WTC11 (cell line): ENCODE measurements at regions of chr3 and their contacts with region 1.

Region 1: GRCh38 chr3:195271116-195271858 is at the start of gene XXYLT1:
- DNase-seq: peak; percentile 94
- ATAC-seq: peak; percentile 92
- H3K4me3 Mint-ChIP-seq: peak within 1 kb of the TSS; percentile 84
- H3K27ac Mint-ChIP-seq: no peak within 1 kb of the TSS; the same call in 1 of the 2 replicates
- H3K4me1 Mint-ChIP-seq: peaks cover 24% of the 10 kb centered on the region
- H3K27me3 Mint-ChIP-seq: no peaks in the 10 kb centered on the region
- CTCF ChIP-seq: peak; percentile 84
- total RNA-seq, gene XXYLT1: 21.4 to 23.4 TPM (median 22.5 TPM) in 3 replicates

Region 2: GRCh38 chr3:195259475-195260279 is 11.6 kb before region 1 on chr3:
- CTCF ChIA-PET with region 1: interaction called, 47 read pairs
- POLR2A ChIA-PET with region 1: interaction called, 6 read pairs
- DNase-seq: peak; percentile 88
- ATAC-seq: peak; percentile 66
- H3K4me3 Mint-ChIP-seq: peak overlapping the region; percentile 58
- H3K27ac Mint-ChIP-seq: no peak overlapping the region
- H3K4me1 Mint-ChIP-seq: peaks cover 46% of the 10 kb centered on the region
- H3K27me3 Mint-ChIP-seq: no peaks in the 10 kb centered on the region
- CTCF ChIP-seq: peak; percentile 85

Region 3: DNA sequence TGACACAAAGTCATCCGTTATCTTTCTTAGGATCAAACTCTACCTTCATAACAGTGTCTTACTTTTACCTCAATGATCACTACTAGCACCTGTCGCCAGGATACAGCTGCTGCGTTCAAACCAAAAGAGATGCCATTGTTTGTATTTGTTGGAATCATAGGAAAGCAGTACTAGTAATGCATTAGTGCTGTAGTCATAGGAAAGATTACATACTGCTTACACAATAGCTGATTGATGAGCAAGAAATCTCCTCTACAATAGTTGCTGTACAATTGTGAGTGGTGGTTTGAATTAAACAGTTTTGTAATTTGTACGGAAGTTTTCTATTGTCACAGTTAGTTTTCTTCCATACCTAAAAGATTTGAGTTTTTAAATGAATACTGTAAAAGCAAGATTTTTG is 150.1 kb after region 1 on chr3:
- CTCF ChIA-PET with region 1: no interaction called
- POLR2A ChIA-PET with region 1: no interaction called
- DNase-seq: no peak
- ATAC-seq: no peak
- H3K4me3 Mint-ChIP-seq: no peak overlapping the region
- H3K27ac Mint-ChIP-seq: no peak overlapping the region
- H3K4me1 Mint-ChIP-seq: peaks cover 6% of the 10 kb centered on the region; the same call in 1 of the 2 replicates
- H3K27me3 Mint-ChIP-seq: no peaks in the 10 kb centered on the region
- CTCF ChIP-seq: no peak

Region 4: GRCh38 chr3:195442573-195443390 is 171.5 kb after region 1 on chr3 and contains the start of gene ACAP2:
- CTCF ChIA-PET with region 1: interaction called, 24 read pairs
- POLR2A ChIA-PET with region 1: interaction called, 10 read pairs
- DNase-seq: peak; percentile 100
- ATAC-seq: peak; percentile 97
- H3K4me3 Mint-ChIP-seq: peak within 1 kb of the TSS; percentile 91
- H3K27ac Mint-ChIP-seq: peak within 1 kb of the TSS; percentile 63
- H3K4me1 Mint-ChIP-seq: peaks cover 40% of the 10 kb centered on the region
- H3K27me3 Mint-ChIP-seq: no peaks in the 10 kb centered on the region
- CTCF ChIP-seq: no peak
- total RNA-seq, gene ACAP2: 39.9 to 42.4 TPM (median 42.0 TPM) in 3 replicates

Region 5: DNA sequence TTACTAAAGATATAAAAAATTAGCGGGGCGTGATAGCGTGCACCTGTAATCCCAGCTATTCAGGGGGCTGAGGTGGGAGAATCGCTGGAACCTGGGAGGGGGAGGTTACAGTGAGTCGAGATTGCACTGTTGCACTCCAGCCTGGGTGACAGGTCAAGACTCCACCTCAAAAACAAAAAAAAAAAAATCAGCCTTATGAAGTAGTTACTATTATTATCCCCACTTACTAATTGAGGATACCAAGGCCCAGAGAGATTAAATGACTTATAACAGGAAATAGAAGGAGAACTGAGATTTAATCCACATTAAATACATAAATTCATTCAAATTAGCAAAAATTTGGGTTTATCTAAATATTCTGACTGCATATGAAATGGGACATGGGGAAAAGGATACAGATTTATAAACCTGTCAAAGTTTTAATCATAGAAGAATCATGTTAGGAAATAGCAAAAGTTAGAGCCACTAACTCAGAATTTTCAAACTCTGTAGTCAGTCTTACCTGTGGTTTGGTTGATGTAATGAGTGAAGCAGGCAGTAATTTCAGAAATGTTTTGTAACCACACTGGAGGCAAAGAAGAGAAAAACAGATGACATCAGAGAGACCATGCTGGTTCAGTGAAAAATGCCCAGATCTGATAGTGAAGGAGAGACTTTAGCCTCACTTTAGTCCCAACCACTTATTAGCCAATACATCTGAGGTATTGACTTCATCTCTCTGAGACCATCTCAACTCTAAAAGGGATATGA is 196.5 kb after region 1 on chr3:
- CTCF ChIA-PET with region 1: no interaction called
- POLR2A ChIA-PET with region 1: no interaction called
- DNase-seq: no peak
- ATAC-seq: no peak
- H3K4me3 Mint-ChIP-seq: no peak overlapping the region
- H3K27ac Mint-ChIP-seq: no peak overlapping the region
- H3K4me1 Mint-ChIP-seq: peaks cover 2% of the 10 kb centered on the region; the same call in 1 of the 2 replicates
- H3K27me3 Mint-ChIP-seq: no peaks in the 10 kb centered on the region; the same call in 1 of the 2 replicates
- CTCF ChIP-seq: no peak

Region 6: DNA sequence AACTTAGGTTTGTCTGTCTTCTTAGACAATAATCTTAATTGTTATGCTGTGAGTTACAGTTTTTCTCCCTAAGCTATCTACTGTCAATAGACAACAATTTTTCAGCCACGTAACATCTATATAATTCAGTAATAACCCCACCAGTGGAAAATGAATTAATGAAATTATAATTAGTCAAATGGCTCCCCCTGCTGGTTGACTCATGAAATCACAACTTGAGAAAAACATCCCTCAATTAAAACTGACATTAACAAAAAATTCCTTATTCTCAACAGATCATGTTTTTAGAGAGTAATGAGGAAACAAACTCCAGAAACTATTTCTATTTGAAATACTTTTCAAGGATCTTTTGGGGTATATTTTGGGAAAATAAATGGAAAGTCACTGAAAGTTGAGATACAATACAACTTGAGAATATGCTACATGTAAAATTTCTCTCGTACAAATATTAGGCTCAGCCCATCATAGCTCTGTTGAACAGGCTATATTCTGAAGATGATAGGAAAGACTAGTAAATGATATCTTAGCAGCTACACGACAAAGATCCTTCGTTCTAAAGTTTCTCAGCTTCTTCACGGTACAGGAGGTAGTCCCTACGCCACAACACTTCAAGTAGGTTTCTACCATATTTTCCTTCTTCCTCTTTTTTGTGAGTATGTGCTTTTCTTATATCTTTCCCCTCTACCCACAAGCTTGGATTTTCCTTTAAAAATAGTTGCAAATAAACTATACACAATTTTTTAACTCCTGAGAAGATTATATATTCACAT is 251.2 kb after region 1 on chr3:
- CTCF ChIA-PET with region 1: interaction called, 49 read pairs
- POLR2A ChIA-PET with region 1: no interaction called
- DNase-seq: no peak
- ATAC-seq: no peak
- H3K4me3 Mint-ChIP-seq: no peak overlapping the region
- H3K27ac Mint-ChIP-seq: no peak overlapping the region
- H3K4me1 Mint-ChIP-seq: no peaks in the 10 kb centered on the region
- H3K27me3 Mint-ChIP-seq: no peaks in the 10 kb centered on the region
- CTCF ChIP-seq: peak; percentile 82

Region 7: DNA sequence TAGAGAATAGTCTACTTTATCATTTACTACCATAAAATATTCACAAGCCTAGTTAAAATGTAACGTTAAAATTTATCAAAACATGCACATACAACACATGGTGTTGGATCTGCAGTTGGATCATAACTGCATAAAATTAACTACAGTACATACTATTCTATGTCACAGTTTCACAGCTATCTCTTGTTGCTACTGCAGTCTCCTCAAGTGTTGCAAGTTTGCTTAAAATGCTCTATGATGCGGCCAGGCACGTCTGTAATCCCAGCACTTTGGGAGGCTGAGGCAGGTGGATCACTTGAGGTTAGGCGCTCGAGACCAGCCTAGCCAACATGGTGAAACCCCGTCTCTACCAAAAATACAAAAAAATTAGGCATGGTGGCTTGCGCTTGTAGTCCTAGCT is 261.5 kb after region 1 on chr3:
- CTCF ChIA-PET with region 1: interaction called, 12 read pairs
- POLR2A ChIA-PET with region 1: no interaction called
- DNase-seq: no peak
- ATAC-seq: no peak
- H3K4me3 Mint-ChIP-seq: no peak overlapping the region
- H3K27ac Mint-ChIP-seq: no peak overlapping the region
- H3K4me1 Mint-ChIP-seq: no peaks in the 10 kb centered on the region
- H3K27me3 Mint-ChIP-seq: no peaks in the 10 kb centered on the region
- CTCF ChIP-seq: no peak

Region 8: DNA sequence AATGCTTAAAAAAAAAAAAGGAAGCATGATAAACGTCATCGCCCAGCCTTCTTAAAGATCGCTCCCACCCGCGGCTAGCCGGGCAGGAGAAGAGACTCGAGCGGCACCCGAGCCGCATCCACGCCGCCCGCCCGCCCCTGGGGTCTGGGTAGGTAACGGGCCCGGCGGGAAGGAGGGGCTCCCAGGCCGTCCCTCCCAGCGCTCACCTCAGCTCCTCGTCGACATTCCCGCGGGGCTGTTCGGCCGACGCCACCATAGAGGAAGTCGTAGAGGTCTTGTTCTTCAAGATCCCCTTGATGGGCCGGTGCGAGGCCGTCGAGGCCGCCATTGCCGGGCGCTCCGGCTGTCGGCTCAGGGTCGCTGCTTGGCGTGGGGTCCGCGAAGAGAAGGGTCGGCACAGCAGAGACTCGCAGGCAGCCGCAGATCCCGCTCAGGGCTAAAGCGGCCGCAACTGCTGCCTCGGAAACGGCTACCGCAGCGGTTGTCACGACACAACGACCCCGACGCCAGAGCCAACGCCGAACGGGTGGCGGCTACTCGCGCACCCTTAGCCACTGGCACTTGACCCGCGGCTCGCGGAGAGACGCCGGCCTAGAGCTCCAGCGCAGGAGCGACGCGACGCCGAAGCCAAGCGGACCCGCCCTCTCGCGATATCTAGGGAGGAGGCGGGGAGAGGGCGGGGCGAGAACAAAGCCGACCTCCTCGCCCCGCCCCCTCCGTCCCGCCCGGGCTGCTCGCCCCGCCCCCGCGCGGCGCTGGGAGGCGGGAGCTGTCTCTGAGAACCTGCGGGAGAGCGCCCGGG is 271.6 kb after region 1 on chr3 and contains the start of gene PPP1R2:
- CTCF ChIA-PET with region 1: interaction called, 37 read pairs
- POLR2A ChIA-PET with region 1: interaction called, 7 read pairs
- DNase-seq: peak; percentile 88
- ATAC-seq: peak; percentile 89
- H3K4me3 Mint-ChIP-seq: peak within 1 kb of the TSS; percentile 89
- H3K27ac Mint-ChIP-seq: no peak within 1 kb of the TSS
- H3K4me1 Mint-ChIP-seq: peaks cover 36% of the 10 kb centered on the region
- H3K27me3 Mint-ChIP-seq: peaks cover 54% of the 10 kb centered on the region
- CTCF ChIP-seq: no peak
- total RNA-seq, gene PPP1R2: 28.1 to 34.0 TPM (median 32.9 TPM) in 3 replicates

Region 9: DNA sequence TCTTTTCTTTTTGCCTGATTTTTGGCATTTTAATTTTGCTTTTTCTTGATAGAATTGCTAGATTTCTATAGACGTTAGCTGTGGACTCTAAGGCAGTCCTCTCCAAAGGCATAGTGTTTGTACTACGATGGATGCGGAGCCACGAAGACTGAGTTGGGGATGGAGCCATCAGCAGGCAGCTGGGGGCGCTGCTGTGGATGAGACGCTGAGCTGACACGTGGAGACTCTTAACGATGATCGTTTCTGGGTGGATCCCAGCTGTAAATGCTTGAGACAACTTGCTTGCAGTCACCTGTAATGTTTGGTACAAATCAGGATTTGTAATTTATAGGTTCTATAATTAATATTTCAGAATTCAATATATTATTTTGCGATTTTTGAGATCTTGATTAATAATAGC is 285.1 kb after region 1 on chr3:
- CTCF ChIA-PET with region 1: interaction called, 16 read pairs
- POLR2A ChIA-PET with region 1: no interaction called
- DNase-seq: peak; percentile 61
- ATAC-seq: peak; percentile 81
- H3K4me3 Mint-ChIP-seq: no peak overlapping the region
- H3K27ac Mint-ChIP-seq: no peak overlapping the region
- H3K4me1 Mint-ChIP-seq: peaks cover 13% of the 10 kb centered on the region
- H3K27me3 Mint-ChIP-seq: peaks cover 21% of the 10 kb centered on the region
- CTCF ChIP-seq: no peak